Naive thymus-derived CD8-positive, alpha-beta T cell (primary cell): ENCODE measurements at regions of chr12 and their contacts with region 1.

Region 1: GRCh38 chr12:49740930-49741881 is at the start of gene TMBIM6:
- DNase-seq: peak; percentile 90 to 100 (median 98)
- ATAC-seq: peak; percentile 88 to 92
- H3K4me3 Mint-ChIP-seq: peak within 1 kb of the TSS; percentile 87 to 99 (median 97)
- H3K27ac Mint-ChIP-seq: peak within 1 kb of the TSS; percentile 97 to 100 (median 98)
- H3K4me1 Mint-ChIP-seq: peaks cover 19 to 49% (median 42%) of the 10 kb centered on the region in 4 donors
- H3K27me3 Mint-ChIP-seq: peaks cover 0 to 3% (median 0%) of the 10 kb centered on the region in 5 donors
- polyA plus RNA-seq, gene TMBIM6: 817 to 1,126 (median 845) TPM

Region 2: DNA sequence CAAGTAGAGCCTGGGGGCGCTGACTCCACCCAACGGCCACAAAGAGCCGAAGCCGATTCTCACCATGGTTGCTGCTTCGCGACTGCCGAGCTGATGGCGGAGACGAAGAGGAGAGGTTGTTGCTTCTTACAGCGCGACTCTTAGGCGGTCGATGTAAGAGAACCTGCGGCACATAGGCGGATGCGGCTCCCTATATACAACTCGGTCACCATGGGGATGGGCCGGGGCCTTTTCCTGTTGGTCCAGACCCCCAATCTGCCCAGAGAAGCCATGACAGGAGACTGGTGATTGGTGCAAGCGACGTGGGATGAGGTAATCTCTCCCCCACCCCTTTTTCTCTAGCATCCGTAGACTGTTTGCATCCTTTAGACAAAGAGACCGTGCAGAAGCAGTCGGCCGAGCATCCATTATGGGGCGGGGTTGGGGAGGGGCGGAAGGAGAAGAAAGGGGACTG is 552.3 kb before region 1 on chr12 and contains the start of gene TUBA1A:
- POLR2A ChIA-PET with region 1: interaction called, 10 read pairs
- DNase-seq: peak; percentile 80 to 99 (median 96)
- ATAC-seq: peak; percentile 79 to 84
- H3K4me3 Mint-ChIP-seq: peak within 1 kb of the TSS; percentile 91 to 99 (median 96)
- H3K27ac Mint-ChIP-seq: peak within 1 kb of the TSS; percentile 97 to 100 (median 99)
- H3K4me1 Mint-ChIP-seq: peaks cover 14 to 31% (median 24%) of the 10 kb centered on the region in 4 donors
- H3K27me3 Mint-ChIP-seq: no peaks in the 10 kb centered on the region
- polyA plus RNA-seq, gene TUBA1A: 139 to 168 (median 147) TPM

Region 3: GRCh38 chr12:49609746-49610089 is 131.5 kb before region 1 on chr12:
- POLR2A ChIA-PET with region 1: no interaction called
- DNase-seq: no peak
- ATAC-seq: no peak
- H3K4me3 Mint-ChIP-seq: no peak overlapping the region
- H3K27ac Mint-ChIP-seq: no peak overlapping the region
- H3K4me1 Mint-ChIP-seq: peaks cover 2 to 7% (median 6%) of the 10 kb centered on the region in 4 donors
- H3K27me3 Mint-ChIP-seq: peaks cover 5 to 17% (median 9%) of the 10 kb centered on the region in 5 donors

Region 4: GRCh38 chr12:49644620-49644994 is 96.6 kb before region 1 on chr12:
- POLR2A ChIA-PET with region 1: interaction called, 10 read pairs
- DNase-seq: peak; percentile 71 to 93 (median 84)
- ATAC-seq: peak; percentile 97 to 99
- H3K4me3 Mint-ChIP-seq: peak overlapping the region in 8 of 10 donors; percentile 3 to 68 (median 29)
- H3K27ac Mint-ChIP-seq: peak overlapping the region; percentile 24 to 95 (median 77)
- H3K4me1 Mint-ChIP-seq: peaks cover 21 to 47% (median 39%) of the 10 kb centered on the region in 4 donors
- H3K27me3 Mint-ChIP-seq: no peaks in the 10 kb centered on the region

Region 5: GRCh38 chr12:49763006-49763591 is 21.9 kb after region 1 on chr12:
- POLR2A ChIA-PET with region 1: interaction called, 47 read pairs
- DNase-seq: peak; percentile 63 to 85 (median 72)
- ATAC-seq: peak; percentile 80 to 82
- H3K4me3 Mint-ChIP-seq: peak overlapping the region; percentile 1 to 79 (median 46)
- H3K27ac Mint-ChIP-seq: peak overlapping the region; percentile 74 to 91 (median 87)
- H3K4me1 Mint-ChIP-seq: peaks cover 31 to 67% (median 59%) of the 10 kb centered on the region in 4 donors
- H3K27me3 Mint-ChIP-seq: no peaks in the 10 kb centered on the region

Region 6: GRCh38 chr12:49828133-49829091 is 87.2 kb after region 1 on chr12 and contains the start of gene NCKAP5L:
- POLR2A ChIA-PET with region 1: interaction called, 38 read pairs
- DNase-seq: peak; percentile 89 to 97 (median 94)
- ATAC-seq: peak; percentile 92 to 93
- H3K4me3 Mint-ChIP-seq: peak within 1 kb of the TSS; percentile 84 to 100 (median 98)
- H3K27ac Mint-ChIP-seq: peak within 1 kb of the TSS; percentile 80 to 100 (median 98)
- H3K4me1 Mint-ChIP-seq: peaks cover 25 to 47% (median 44%) of the 10 kb centered on the region in 4 donors
- H3K27me3 Mint-ChIP-seq: no peaks in the 10 kb centered on the region
- polyA plus RNA-seq, gene NCKAP5L: 1.9 to 5.1 (median 2.4) TPM